PC-3 (cell line): ENCODE measurements at regions of chr6 and their contacts with region 1.

Region 1: GRCh38 chr6:131348319-131348971 is 213.2 kb downstream of the AKAP7 start:
- DNase-seq: no peak
- ATAC-seq: no peak
- H3K4me3 ChIP-seq: no peak overlapping the region
- H3K27ac ChIP-seq: no peak overlapping the region
- H3K4me1 ChIP-seq: no peaks in the 10 kb centered on the region
- H3K27me3 ChIP-seq: peaks cover 11% of the 10 kb centered on the region; the same call in 1 of the 2 replicates
- CTCF ChIP-seq: no peak

Region 2: GRCh38 chr6:131317516-131317915 is 30.9 kb before region 1 on chr6:
- CTCF ChIA-PET with region 1: no interaction called
- POLR2A ChIA-PET with region 1: no interaction called
- intact Hi-C with region 1: no loop called
- DNase-seq: no peak
- ATAC-seq: no peak
- H3K4me3 ChIP-seq: no peak overlapping the region
- H3K27ac ChIP-seq: no peak overlapping the region
- H3K4me1 ChIP-seq: no peaks in the 10 kb centered on the region
- H3K27me3 ChIP-seq: peaks cover 6% of the 10 kb centered on the region; the same call in 1 of the 2 replicates
- CTCF ChIP-seq: no peak

Region 3: GRCh38 chr6:131460614-131461000 is 112.2 kb after region 1 on chr6:
- CTCF ChIA-PET with region 1: no interaction called
- POLR2A ChIA-PET with region 1: interaction called, 17 read pairs
- intact Hi-C with region 1: no loop called
- DNase-seq: no peak
- ATAC-seq: no peak; the same call in 1 of the 2 replicates
- H3K4me3 ChIP-seq: no peak overlapping the region
- H3K27ac ChIP-seq: no peak overlapping the region
- H3K4me1 ChIP-seq: no peaks in the 10 kb centered on the region
- H3K27me3 ChIP-seq: no peaks in the 10 kb centered on the region
- CTCF ChIP-seq: no peak